ENCODE measurements at regions of chr6 and their contacts with region 1.

Region 1: GRCh38 chr6:152184917-152185574 is 377.6 kb downstream of the ESR1 start:
- DNase-seq: peak in 7 of 9 donors; percentile 25 to 78 (median 66)
- ATAC-seq: peak; percentile 77
- H3K4me3 ChIP-seq: peak overlapping the region; percentile 56
- H3K4me3 Mint-ChIP-seq: peak overlapping the region; percentile 87 to 99 (median 96)
- H3K27ac ChIP-seq: peak overlapping the region; percentile 71
- H3K27ac Mint-ChIP-seq: peak overlapping the region; percentile 95 to 100 (median 99)
- H3K4me1 ChIP-seq: peaks cover 37 to 48% of the 10 kb centered on the region in 2 donors
- H3K4me1 Mint-ChIP-seq: peaks cover 46 to 92% (median 75%) of the 10 kb centered on the region in 7 donors
- H3K27me3 ChIP-seq: no peaks in the 10 kb centered on the region
- H3K27me3 Mint-ChIP-seq: no peaks in the 10 kb centered on the region

Region 2: GRCh38 chr6:150409576-150410066 is 1775.4 kb before region 1 on chr6:
- CTCF ChIA-PET with region 1: no interaction called
- POLR2A ChIA-PET with region 1: no interaction called
- intact Hi-C with region 1: no loop called
- DNase-seq: no peak
- ATAC-seq: no peak
- H3K4me3 ChIP-seq: no peak overlapping the region
- H3K4me3 Mint-ChIP-seq: no peak overlapping the region
- H3K27ac ChIP-seq: no peak overlapping the region
- H3K27ac Mint-ChIP-seq: no peak overlapping the region
- H3K4me1 ChIP-seq: no peaks in the 10 kb centered on the region
- H3K4me1 Mint-ChIP-seq: no peaks in the 10 kb centered on the region
- H3K27me3 ChIP-seq: no peaks in the 10 kb centered on the region
- H3K27me3 Mint-ChIP-seq: peaks cover 31 to 48% (median 43%) of the 10 kb centered on the region in 5 donors

Region 3: GRCh38 chr6:151661928-151662327 is 523.1 kb before region 1 on chr6:
- CTCF ChIA-PET with region 1: no interaction called
- POLR2A ChIA-PET with region 1: no interaction called
- intact Hi-C with region 1: no loop called
- DNase-seq: no peak
- ATAC-seq: no peak
- H3K4me3 ChIP-seq: no peak overlapping the region
- H3K4me3 Mint-ChIP-seq: no peak overlapping the region
- H3K27ac ChIP-seq: no peak overlapping the region
- H3K27ac Mint-ChIP-seq: peak overlapping the region in 1 of 9 donors; percentile 18
- H3K4me1 ChIP-seq: no peaks in the 10 kb centered on the region
- H3K4me1 Mint-ChIP-seq: no peaks in the 10 kb centered on the region
- H3K27me3 ChIP-seq: peaks cover 0 to 3% of the 10 kb centered on the region in 2 donors
- H3K27me3 Mint-ChIP-seq: peaks cover 8 to 30% (median 21%) of the 10 kb centered on the region in 5 donors

Region 4: DNA sequence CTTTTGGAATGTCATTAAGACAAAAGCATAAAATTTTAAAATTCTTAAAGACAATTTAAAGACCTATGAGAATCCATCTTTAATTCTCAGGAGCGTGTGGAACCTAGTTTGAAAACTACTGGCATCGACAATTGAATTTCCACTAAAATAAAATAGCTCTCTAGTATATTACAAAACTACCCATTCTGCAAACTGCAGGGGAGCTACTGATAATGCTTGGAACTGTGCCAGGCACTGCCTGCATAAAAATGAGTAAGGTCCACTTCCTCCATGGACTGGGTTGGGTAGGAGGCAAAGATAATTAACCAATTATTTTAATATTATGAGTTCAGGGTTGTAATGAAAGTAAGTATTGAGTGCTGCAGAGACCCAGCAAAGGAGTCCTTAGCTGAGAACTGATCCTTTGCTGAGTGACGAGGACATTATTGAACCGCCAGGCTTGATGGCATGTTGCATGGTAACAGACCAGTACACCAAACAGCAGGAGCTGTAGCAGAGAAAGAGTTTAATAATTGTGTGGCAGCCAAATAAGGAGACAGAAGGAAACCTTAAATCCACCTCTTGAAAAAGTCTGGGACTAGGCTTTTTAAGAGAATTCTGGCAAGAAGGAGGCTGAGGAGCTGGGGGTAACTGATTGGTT is 116.3 kb before region 1 on chr6:
- CTCF ChIA-PET with region 1: no interaction called
- POLR2A ChIA-PET with region 1: no interaction called
- intact Hi-C with region 1: no loop called
- DNase-seq: no peak
- ATAC-seq: no peak
- H3K4me3 ChIP-seq: no peak overlapping the region
- H3K4me3 Mint-ChIP-seq: no peak overlapping the region
- H3K27ac ChIP-seq: no peak overlapping the region
- H3K27ac Mint-ChIP-seq: no peak overlapping the region
- H3K4me1 ChIP-seq: no peaks in the 10 kb centered on the region
- H3K4me1 Mint-ChIP-seq: no peaks in the 10 kb centered on the region
- H3K27me3 ChIP-seq: no peaks in the 10 kb centered on the region
- H3K27me3 Mint-ChIP-seq: peaks cover 0 to 3% (median 0%) of the 10 kb centered on the region in 5 donors

Region 5: GRCh38 chr6:152161469-152161868 is 23.6 kb before region 1 on chr6:
- CTCF ChIA-PET with region 1: interaction called, 3 read pairs
- POLR2A ChIA-PET with region 1: interaction called, 13 read pairs
- intact Hi-C with region 1: no loop called
- DNase-seq: no peak
- ATAC-seq: no peak
- H3K4me3 ChIP-seq: no peak overlapping the region
- H3K4me3 Mint-ChIP-seq: no peak overlapping the region
- H3K27ac ChIP-seq: peak overlapping the region; percentile 30
- H3K27ac Mint-ChIP-seq: peak overlapping the region in 8 of 9 donors; percentile 10 to 90 (median 67)
- H3K4me1 ChIP-seq: no peaks in the 10 kb centered on the region
- H3K4me1 Mint-ChIP-seq: peaks cover 0 to 22% (median 16%) of the 10 kb centered on the region in 7 donors
- H3K27me3 ChIP-seq: no peaks in the 10 kb centered on the region
- H3K27me3 Mint-ChIP-seq: no peaks in the 10 kb centered on the region

Region 6: GRCh38 chr6:152170705-152171667 is 14.1 kb before region 1 on chr6:
- CTCF ChIA-PET with region 1: interaction called, 5 read pairs
- POLR2A ChIA-PET with region 1: interaction called, 32 read pairs
- intact Hi-C with region 1: loop called (anchors 1 kb)
- DNase-seq: peak in 3 of 9 donors; percentile 11 to 37 (median 22)
- ATAC-seq: peak; percentile 87
- H3K4me3 ChIP-seq: peak overlapping the region; percentile 16
- H3K4me3 Mint-ChIP-seq: peak overlapping the region in 9 of 10 donors; percentile 14 to 76 (median 55)
- H3K27ac ChIP-seq: peak overlapping the region; percentile 12
- H3K27ac Mint-ChIP-seq: peak overlapping the region; percentile 65 to 94 (median 88)
- H3K4me1 ChIP-seq: peaks cover 12 to 25% of the 10 kb centered on the region in 2 donors
- H3K4me1 Mint-ChIP-seq: peaks cover 23 to 71% (median 57%) of the 10 kb centered on the region in 7 donors
- H3K27me3 ChIP-seq: no peaks in the 10 kb centered on the region
- H3K27me3 Mint-ChIP-seq: no peaks in the 10 kb centered on the region

Region 7: GRCh38 chr6:152201120-152201519 is 16.1 kb after region 1 on chr6:
- CTCF ChIA-PET with region 1: interaction called, 9 read pairs
- POLR2A ChIA-PET with region 1: interaction called, 33 read pairs
- intact Hi-C with region 1: loop called (anchors 2 kb)
- DNase-seq: no peak
- ATAC-seq: no peak
- H3K4me3 ChIP-seq: no peak overlapping the region
- H3K4me3 Mint-ChIP-seq: no peak overlapping the region
- H3K27ac ChIP-seq: no peak overlapping the region
- H3K27ac Mint-ChIP-seq: peak overlapping the region in 1 of 9 donors; percentile 53
- H3K4me1 ChIP-seq: no peaks in the 10 kb centered on the region
- H3K4me1 Mint-ChIP-seq: peaks cover under 1 to 20% (median 17%) of the 10 kb centered on the region in 7 donors
- H3K27me3 ChIP-seq: no peaks in the 10 kb centered on the region
- H3K27me3 Mint-ChIP-seq: no peaks in the 10 kb centered on the region

Region 8: GRCh38 chr6:152206072-152206818 is 21.2 kb after region 1 on chr6:
- CTCF ChIA-PET with region 1: interaction called, 9 read pairs
- POLR2A ChIA-PET with region 1: interaction called, 15 read pairs
- intact Hi-C with region 1: loop called (anchors 2 kb)
- DNase-seq: peak in 7 of 9 donors; percentile 15 to 50 (median 39)
- ATAC-seq: peak; percentile 45
- H3K4me3 ChIP-seq: no peak overlapping the region
- H3K4me3 Mint-ChIP-seq: no peak overlapping the region
- H3K27ac ChIP-seq: no peak overlapping the region
- H3K27ac Mint-ChIP-seq: peak overlapping the region in 5 of 9 donors; percentile 3 to 72 (median 14)
- H3K4me1 ChIP-seq: no peaks in the 10 kb centered on the region
- H3K4me1 Mint-ChIP-seq: peaks cover 0 to 12% (median 7%) of the 10 kb centered on the region in 7 donors
- H3K27me3 ChIP-seq: no peaks in the 10 kb centered on the region
- H3K27me3 Mint-ChIP-seq: no peaks in the 10 kb centered on the region

Region 9: GRCh38 chr6:152232501-152233151 is 47.6 kb after region 1 on chr6:
- CTCF ChIA-PET with region 1: interaction called, 8 read pairs
- POLR2A ChIA-PET with region 1: interaction called, 37 read pairs
- intact Hi-C with region 1: loop called (anchors 1 kb)
- DNase-seq: peak in 5 of 9 donors; percentile 1 to 31 (median 21)
- ATAC-seq: peak; percentile 58
- H3K4me3 ChIP-seq: no peak overlapping the region
- H3K4me3 Mint-ChIP-seq: peak overlapping the region; percentile 55 to 84 (median 78)
- H3K27ac ChIP-seq: no peak overlapping the region
- H3K27ac Mint-ChIP-seq: peak overlapping the region; percentile 35 to 95 (median 86)
- H3K4me1 ChIP-seq: peaks cover 2 to 14% of the 10 kb centered on the region in 2 donors
- H3K4me1 Mint-ChIP-seq: peaks cover 10 to 33% (median 30%) of the 10 kb centered on the region in 7 donors
- H3K27me3 ChIP-seq: no peaks in the 10 kb centered on the region
- H3K27me3 Mint-ChIP-seq: no peaks in the 10 kb centered on the region

Region 10: GRCh38 chr6:152975204-152975915 is 790.3 kb after region 1 on chr6:
- CTCF ChIA-PET with region 1: no interaction called
- POLR2A ChIA-PET with region 1: no interaction called
- intact Hi-C with region 1: loop called in 1 of 2 experiments (anchors 10 kb)
- DNase-seq: no peak
- ATAC-seq: peak; percentile 90
- H3K4me3 ChIP-seq: no peak overlapping the region
- H3K4me3 Mint-ChIP-seq: peak overlapping the region in 2 of 10 donors; percentile 22 to 73
- H3K27ac ChIP-seq: no peak overlapping the region
- H3K27ac Mint-ChIP-seq: peak overlapping the region in 1 of 9 donors; percentile 76
- H3K4me1 ChIP-seq: peaks cover 0 to 5% of the 10 kb centered on the region in 2 donors
- H3K4me1 Mint-ChIP-seq: peaks cover 21 to 65% (median 29%) of the 10 kb centered on the region in 7 donors
- H3K27me3 ChIP-seq: no peaks in the 10 kb centered on the region
- H3K27me3 Mint-ChIP-seq: no peaks in the 10 kb centered on the region